GM13977 (cell line): ENCODE measurements at regions of chr21 and their contacts with region 1.

Region 1: GRCh38 chr21:32826329-32827167 is 55.0 kb upstream of the PAXBP1 start:
- DNase-seq: peak; percentile 64
- CTCF ChIP-seq: peak; percentile 72

Region 2: GRCh38 chr21:32653311-32653901 is 173.1 kb before region 1 on chr21:
- in situ Hi-C with region 1: loop called (anchors 10 kb)
- DNase-seq: peak; percentile 58
- CTCF ChIP-seq: peak; percentile 76